HCT116 (cell line): ENCODE measurements at regions of chr10 and their contacts with region 1.

Region 1: GRCh38 chr10:100518761-100519241 is 860 bp downstream of the SEC31B start:
- DNase-seq: peak; percentile 41
- ATAC-seq: peak; percentile 79
- H3K4me3 ChIP-seq: no peak overlapping the region
- H3K27ac ChIP-seq: no peak overlapping the region
- H3K4me1 ChIP-seq: no peaks in the 10 kb centered on the region
- H3K27me3 ChIP-seq: no peaks in the 10 kb centered on the region
- CTCF ChIP-seq: peak; percentile 83 to 89 (median 87)
- POLR2A ChIP-seq: no peak
- RAD21 ChIP-seq: peak; percentile 82

Region 2: GRCh38 chr10:100303724-100304319 is 215.0 kb before region 1 on chr10:
- CTCF ChIA-PET with region 1: interaction called, 16 read pairs
- POLR2A ChIA-PET with region 1: no interaction called
- RAD21 ChIA-PET with region 1: no interaction called
- intact Hi-C with region 1: no loop called
- DNase-seq: peak; percentile 32
- ATAC-seq: peak; percentile 87
- H3K4me3 ChIP-seq: no peak overlapping the region
- H3K27ac ChIP-seq: no peak overlapping the region
- H3K4me1 ChIP-seq: peaks cover 4 to 7% of the 10 kb centered on the region in 2 experiments; a peak in 2 of 4 replicates
- H3K27me3 ChIP-seq: no peaks in the 10 kb centered on the region; the same call in 1 of the 2 replicates
- CTCF ChIP-seq: peak; percentile 84 to 91 (median 87); a peak in 5 of 6 replicates
- POLR2A ChIP-seq: no peak
- RAD21 ChIP-seq: peak; percentile 89

Region 3: GRCh38 chr10:100346765-100347567 is 171.8 kb before region 1 on chr10 and contains the start of gene SCD:
- CTCF ChIA-PET with region 1: interaction called, 14 read pairs
- POLR2A ChIA-PET with region 1: interaction called, 3 read pairs
- RAD21 ChIA-PET with region 1: interaction called, 3 read pairs
- intact Hi-C with region 1: no loop called
- DNase-seq: peak; percentile 89
- ATAC-seq: peak; percentile 88
- H3K4me3 ChIP-seq: peak within 1 kb of the TSS; percentile 92
- H3K27ac ChIP-seq: peak within 1 kb of the TSS; percentile 96
- H3K4me1 ChIP-seq: peaks cover 44 to 54% of the 10 kb centered on the region in 2 experiments
- H3K27me3 ChIP-seq: no peaks in the 10 kb centered on the region
- CTCF ChIP-seq: no peak
- POLR2A ChIP-seq: peak; percentile 74
- RAD21 ChIP-seq: no peak
- total RNA-seq, gene SCD: 652 TPM

Region 4: DNA sequence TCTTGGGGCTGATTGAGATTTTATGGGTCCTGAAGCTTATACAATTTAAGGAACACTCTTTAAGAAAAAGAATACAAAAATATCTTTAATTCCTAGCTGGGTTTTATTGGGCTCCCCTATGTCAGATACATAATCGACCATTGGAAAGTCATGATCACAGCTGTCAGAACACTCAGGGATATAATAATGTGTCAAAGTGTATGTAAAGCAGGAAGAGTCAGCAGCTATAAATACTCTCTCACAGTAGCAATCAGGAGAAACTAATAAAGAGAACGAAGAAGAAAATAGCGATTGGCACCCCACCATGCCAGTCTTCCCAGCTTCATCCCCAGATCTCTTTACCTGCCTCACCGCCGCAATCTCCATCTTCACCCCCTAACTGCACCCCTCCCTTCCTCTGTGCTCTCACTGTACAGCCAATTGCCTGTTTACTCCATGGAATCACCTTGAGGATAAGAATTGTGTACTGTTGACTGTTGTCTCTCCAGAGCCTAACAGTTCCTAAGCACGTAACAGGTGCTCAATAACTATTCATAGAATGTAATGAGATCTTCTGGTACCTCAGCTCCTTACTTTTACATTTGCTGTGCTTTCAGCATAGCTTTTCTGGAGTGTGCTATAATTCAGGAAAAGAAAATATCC is 80.0 kb before region 1 on chr10:
- CTCF ChIA-PET with region 1: interaction called, 30 read pairs
- POLR2A ChIA-PET with region 1: no interaction called
- RAD21 ChIA-PET with region 1: interaction called, 3 to 7 read pairs
- intact Hi-C with region 1: loop called (anchors 1 kb)
- DNase-seq: no peak
- ATAC-seq: no peak
- H3K4me3 ChIP-seq: no peak overlapping the region
- H3K27ac ChIP-seq: no peak overlapping the region
- H3K4me1 ChIP-seq: peaks cover 0 to 4% of the 10 kb centered on the region in 2 experiments; a peak in 2 of 4 replicates
- H3K27me3 ChIP-seq: no peaks in the 10 kb centered on the region
- CTCF ChIP-seq: no peak
- POLR2A ChIP-seq: no peak
- RAD21 ChIP-seq: no peak

Region 5: DNA sequence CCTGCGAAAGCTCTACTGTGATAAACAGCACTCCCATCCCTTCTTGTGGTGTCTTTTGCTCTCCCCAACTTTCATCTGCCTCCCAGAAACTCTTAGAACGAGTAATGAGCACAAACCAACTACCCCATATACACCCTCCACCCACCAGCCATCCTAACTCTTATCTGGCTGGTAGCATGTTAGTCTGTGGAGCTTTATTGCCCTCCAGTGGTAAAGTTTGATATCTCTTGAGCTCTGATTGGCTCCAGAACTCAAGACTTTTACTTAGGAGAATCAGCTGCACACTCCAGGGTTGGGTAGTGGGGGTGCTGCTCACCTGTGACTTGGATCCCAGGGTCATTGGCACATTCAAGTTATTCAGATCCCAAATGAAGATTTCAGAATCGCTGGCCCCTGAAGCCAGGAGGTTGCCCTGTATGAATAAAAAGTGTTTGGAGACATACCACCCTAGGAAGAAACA is 10.1 kb before region 1 on chr10:
- CTCF ChIA-PET with region 1: interaction called, 30 read pairs
- POLR2A ChIA-PET with region 1: interaction called, 3 read pairs
- RAD21 ChIA-PET with region 1: interaction called, 4 to 7 read pairs
- intact Hi-C with region 1: no loop called
- DNase-seq: peak; percentile 46
- ATAC-seq: peak; percentile 96
- H3K4me3 ChIP-seq: no peak overlapping the region
- H3K27ac ChIP-seq: no peak overlapping the region
- H3K4me1 ChIP-seq: peaks cover 0 to 4% of the 10 kb centered on the region in 2 experiments; a peak in 1 of 4 replicates
- H3K27me3 ChIP-seq: no peaks in the 10 kb centered on the region
- CTCF ChIP-seq: peak; percentile 76 to 92 (median 91)
- POLR2A ChIP-seq: no peak
- RAD21 ChIP-seq: peak; percentile 92

Region 6: GRCh38 chr10:100535715-100536353 is 17.0 kb after region 1 on chr10 and contains the start of gene HIF1AN:
- CTCF ChIA-PET with region 1: interaction called, 36 read pairs
- POLR2A ChIA-PET with region 1: interaction called, 4 read pairs
- RAD21 ChIA-PET with region 1: no interaction called
- intact Hi-C with region 1: no loop called
- DNase-seq: peak; percentile 97
- ATAC-seq: peak; percentile 99
- H3K4me3 ChIP-seq: peak within 1 kb of the TSS; percentile 79 to 83
- H3K27ac ChIP-seq: peak within 1 kb of the TSS; percentile 14; the same call in 1 of the 2 replicates
- H3K4me1 ChIP-seq: peaks cover 10 to 17% of the 10 kb centered on the region in 2 experiments
- H3K27me3 ChIP-seq: no peaks in the 10 kb centered on the region
- CTCF ChIP-seq: peak; percentile 80 to 99 (median 97)
- POLR2A ChIP-seq: peak; percentile 92
- RAD21 ChIP-seq: no peak
- total RNA-seq, gene HIF1AN: 67.2 TPM

Region 7: DNA sequence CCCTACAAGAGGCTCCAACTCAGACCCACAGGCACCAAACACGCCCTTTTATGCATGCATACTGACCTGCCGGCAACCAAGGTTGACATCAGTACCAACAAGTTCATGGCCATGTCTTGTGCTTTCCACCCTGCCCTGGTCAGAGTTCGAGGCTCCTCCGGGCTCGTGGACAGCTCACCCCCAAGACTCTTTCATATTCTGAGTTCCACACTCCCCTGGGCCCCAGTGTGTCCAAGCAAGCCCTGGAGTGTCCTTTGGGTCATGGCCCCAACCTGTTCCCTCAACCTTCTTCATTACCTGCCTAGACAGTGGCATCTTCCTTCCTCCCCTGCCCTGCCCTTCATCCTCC is 57.5 kb after region 1 on chr10:
- CTCF ChIA-PET with region 1: no interaction called
- POLR2A ChIA-PET with region 1: no interaction called
- RAD21 ChIA-PET with region 1: no interaction called
- intact Hi-C with region 1: no loop called
- DNase-seq: no peak
- ATAC-seq: no peak
- H3K4me3 ChIP-seq: no peak overlapping the region
- H3K27ac ChIP-seq: no peak overlapping the region
- H3K4me1 ChIP-seq: peaks cover 0 to 5% of the 10 kb centered on the region in 2 experiments; a peak in 1 of 4 replicates
- H3K27me3 ChIP-seq: no peaks in the 10 kb centered on the region
- CTCF ChIP-seq: no peak
- POLR2A ChIP-seq: no peak
- RAD21 ChIP-seq: no peak